Heart left ventricle (tissue), 16 donors: ENCODE measurements at regions of chr3 and their contacts with region 1.

Region 1: GRCh38 chr3:60365360-60365759 is 885.9 kb downstream of the FHIT start:
- DNase-seq: no peak
- ATAC-seq: no peak
- H3K4me3 ChIP-seq: no peak overlapping the region
- H3K27ac ChIP-seq: no peak overlapping the region
- H3K4me1 ChIP-seq: no peaks in the 10 kb centered on the region
- H3K27me3 ChIP-seq: no peaks in the 10 kb centered on the region
- CTCF ChIP-seq: no peak
- POLR2A ChIP-seq: no peak

Region 2: DNA sequence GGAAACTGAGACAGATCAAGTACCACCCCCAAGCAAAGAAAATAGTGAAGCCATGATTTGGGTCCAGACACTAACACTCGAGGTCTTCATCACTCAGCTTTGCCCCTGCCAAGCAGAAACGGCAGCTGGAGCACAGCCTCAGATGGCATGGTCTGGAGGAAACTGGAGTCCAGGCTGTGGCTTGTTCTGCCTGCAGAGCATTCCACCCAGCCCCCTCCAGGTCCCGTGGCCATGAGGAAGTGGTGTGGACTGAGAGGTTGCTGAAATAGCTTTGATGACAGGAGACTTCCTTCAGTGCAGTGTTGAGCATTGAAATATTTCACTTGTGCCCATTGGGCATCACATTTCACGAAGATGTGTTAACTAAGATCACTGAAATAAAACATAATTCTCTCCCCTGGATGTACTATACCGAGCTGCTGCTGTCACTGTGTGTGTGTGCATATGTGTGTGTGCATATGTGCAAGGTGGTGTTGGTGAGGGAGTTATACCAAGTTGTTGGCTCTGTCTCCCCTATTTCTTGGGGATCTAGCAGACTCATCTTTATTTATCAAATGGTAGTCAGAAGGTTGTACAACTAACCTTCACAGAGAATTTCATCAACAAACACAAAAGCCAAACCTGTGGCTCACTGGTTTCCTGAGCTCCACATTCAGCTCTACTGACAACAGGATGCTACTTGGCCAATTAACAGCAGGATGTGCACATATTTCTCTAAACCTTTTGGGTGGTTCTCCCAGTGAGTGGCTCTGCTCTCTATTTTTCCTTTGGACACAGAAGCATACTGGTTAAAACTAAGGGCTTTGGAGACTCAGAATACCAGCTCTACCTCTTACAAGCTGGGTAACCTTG is 655.4 kb before region 1 on chr3:
- intact Hi-C with region 1: loop called in 1 of 10 experiments (anchors 10 kb)
- DNase-seq: peak; percentile 42 to 74 (median 56)
- ATAC-seq: peak in 3 of 4 donors; percentile 73 to 88 (median 82)
- H3K4me3 ChIP-seq: no peak overlapping the region
- H3K27ac ChIP-seq: no peak overlapping the region
- H3K4me1 ChIP-seq: peaks cover 0 to 10% (median 0%) of the 10 kb centered on the region in 12 donors
- H3K27me3 ChIP-seq: no peaks in the 10 kb centered on the region
- CTCF ChIP-seq: no peak
- POLR2A ChIP-seq: no peak

Region 3: GRCh38 chr3:60434950-60435349 is 69.6 kb after region 1 on chr3:
- intact Hi-C with region 1: no loop called
- DNase-seq: no peak
- ATAC-seq: no peak
- H3K4me3 ChIP-seq: no peak overlapping the region
- H3K27ac ChIP-seq: no peak overlapping the region
- H3K4me1 ChIP-seq: peaks cover 0 to 3% (median 0%) of the 10 kb centered on the region in 12 donors
- H3K27me3 ChIP-seq: no peaks in the 10 kb centered on the region
- CTCF ChIP-seq: no peak
- POLR2A ChIP-seq: no peak

Region 4: GRCh38 chr3:60523536-60523935 is 158.2 kb after region 1 on chr3:
- intact Hi-C with region 1: no loop called
- DNase-seq: no peak
- ATAC-seq: no peak
- H3K4me3 ChIP-seq: no peak overlapping the region
- H3K27ac ChIP-seq: no peak overlapping the region
- H3K4me1 ChIP-seq: no peaks in the 10 kb centered on the region
- H3K27me3 ChIP-seq: no peaks in the 10 kb centered on the region
- CTCF ChIP-seq: no peak
- POLR2A ChIP-seq: no peak